Endothelial cell of umbilical vein (primary cell): ENCODE measurements at regions of chr17 and their contacts with region 1.

Region 1: GRCh38 chr17:59220376-59221158 is at the start of gene GDPD1:
- DNase-seq: peak; percentile 97
- H3K4me3 ChIP-seq: peak within 1 kb of the TSS; percentile 39 to 67 (median 51)
- H3K27ac ChIP-seq: peak within 1 kb of the TSS; percentile 4
- H3K4me1 ChIP-seq: peaks cover 3% of the 10 kb centered on the region
- H3K27me3 ChIP-seq: no peaks in the 10 kb centered on the region
- CTCF ChIP-seq: peak; percentile 57 to 69
- POLR2A ChIP-seq: peak; percentile 33
- total RNA-seq, gene GDPD1: 4.3 and 4.9 TPM in 2 replicates

Region 2: GRCh38 chr17:58504826-58505521 is 715.6 kb before region 1 on chr17:
- CTCF ChIA-PET with region 1: no interaction called
- POLR2A ChIA-PET with region 1: no interaction called
- dilution Hi-C with region 1: no loop called
- intact Hi-C with region 1: no loop called
- DNase-seq: no peak
- H3K4me3 ChIP-seq: no peak overlapping the region
- H3K27ac ChIP-seq: no peak overlapping the region
- H3K4me1 ChIP-seq: no peaks in the 10 kb centered on the region
- H3K27me3 ChIP-seq: no peaks in the 10 kb centered on the region
- CTCF ChIP-seq: no peak
- POLR2A ChIP-seq: no peak

Region 3: DNA sequence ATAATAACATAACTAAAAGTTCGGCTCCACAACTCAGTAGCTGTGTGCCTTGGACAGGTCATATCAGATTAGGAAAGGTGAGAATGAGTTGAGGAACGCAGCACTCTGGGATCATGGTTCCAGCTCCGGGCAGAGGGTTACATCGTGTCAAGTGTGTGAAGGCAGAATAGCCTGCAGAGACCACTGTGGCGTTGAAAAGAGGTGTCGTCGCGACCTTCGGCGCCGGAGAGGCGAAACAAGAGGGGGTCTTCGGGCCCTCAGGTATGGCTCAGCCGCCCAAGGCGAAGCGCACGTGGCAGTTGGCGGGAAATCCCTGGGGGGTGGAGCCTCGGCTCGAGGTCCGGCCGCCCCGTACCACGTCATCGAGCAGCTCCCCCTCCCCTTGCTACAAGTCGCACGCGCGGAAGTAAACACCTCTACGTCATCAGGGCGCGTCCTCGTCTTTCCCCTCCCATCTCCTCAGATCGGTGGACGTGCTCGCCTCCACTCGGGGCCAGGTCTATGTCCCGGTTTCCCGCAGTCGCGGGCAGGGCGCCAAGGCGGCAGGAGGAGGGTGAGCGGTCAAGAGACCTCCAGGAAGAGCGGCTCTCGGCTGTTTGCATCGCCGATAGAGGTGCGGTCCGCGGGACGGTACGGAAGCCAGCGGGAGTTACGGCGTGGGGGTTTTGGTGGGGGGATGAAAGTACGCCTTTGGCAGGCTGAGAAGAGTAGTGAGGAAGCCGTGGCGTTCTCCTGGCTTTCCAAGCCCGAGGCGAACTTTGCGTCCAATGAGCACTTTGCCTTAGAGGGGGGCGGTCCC is 344.8 kb after region 1 on chr17 and contains the start of gene DHX40:
- CTCF ChIA-PET with region 1: no interaction called
- POLR2A ChIA-PET with region 1: no interaction called
- dilution Hi-C with region 1: no loop called
- intact Hi-C with region 1: loop called (anchors 10 kb)
- DNase-seq: peak; percentile 92
- H3K4me3 ChIP-seq: peak within 1 kb of the TSS; percentile 51 to 95 (median 77)
- H3K27ac ChIP-seq: peak within 1 kb of the TSS; percentile 53
- H3K4me1 ChIP-seq: peaks cover 7% of the 10 kb centered on the region
- H3K27me3 ChIP-seq: no peaks in the 10 kb centered on the region
- CTCF ChIP-seq: no peak
- POLR2A ChIP-seq: peak; percentile 20
- total RNA-seq, gene DHX40: 28.6 and 29.7 TPM in 2 replicates